Adrenal gland (tissue), 19 donors: ENCODE measurements at regions of chr16 and their contacts with region 1.

Region 1: GRCh38 chr16:47965439-47965838 is 190.4 kb downstream of the ABCC12 start:
- DNase-seq: no peak
- H3K4me3 ChIP-seq: no peak overlapping the region
- H3K27ac ChIP-seq: no peak overlapping the region
- H3K4me1 ChIP-seq: no peaks in the 10 kb centered on the region
- H3K27me3 ChIP-seq: no peaks in the 10 kb centered on the region
- CTCF ChIP-seq: no peak
- POLR2A ChIP-seq: no peak

Region 2: GRCh38 chr16:48014349-48015135 is 49.1 kb after region 1 on chr16:
- intact Hi-C with region 1: loop called in 1 of 2 experiments (anchors 5 kb)
- DNase-seq: no peak
- H3K4me3 ChIP-seq: no peak overlapping the region
- H3K27ac ChIP-seq: no peak overlapping the region
- H3K4me1 ChIP-seq: no peaks in the 10 kb centered on the region
- H3K27me3 ChIP-seq: no peaks in the 10 kb centered on the region
- CTCF ChIP-seq: no peak
- POLR2A ChIP-seq: no peak